Gastrocnemius medialis (tissue), 4 donors: ENCODE measurements at regions of chr12 and their contacts with region 1.

Region 1: GRCh38 chr12:40152783-40153383 is 47.0 kb upstream of the SLC2A13 start:
- DNase-seq: peak in 1 of 2 donors; percentile 21
- ATAC-seq: no peak
- H3K4me3 ChIP-seq: no peak overlapping the region
- H3K27ac ChIP-seq: no peak overlapping the region
- H3K4me1 ChIP-seq: no peaks in the 10 kb centered on the region
- H3K27me3 ChIP-seq: no peaks in the 10 kb centered on the region
- CTCF ChIP-seq: peak; percentile 37 to 81 (median 54)
- POLR2A ChIP-seq: no peak

Region 2: DNA sequence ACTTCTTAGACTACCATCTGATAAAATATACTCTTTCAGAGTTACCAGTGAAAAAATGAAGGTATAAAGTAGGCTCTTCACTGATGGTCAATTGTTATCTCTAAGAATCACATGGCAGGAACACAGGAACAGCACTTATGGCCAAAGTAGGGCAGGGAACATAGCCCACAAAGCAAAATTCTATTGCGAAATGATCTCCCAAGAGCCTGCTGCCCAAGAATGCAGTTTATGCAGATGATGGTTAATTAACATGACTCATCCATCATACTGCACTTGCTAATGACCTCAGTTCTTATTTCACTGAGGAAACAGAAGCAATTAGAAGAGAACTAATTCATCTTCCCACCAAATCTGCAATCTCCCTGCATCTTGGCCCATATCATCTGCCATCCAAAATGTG is 180.8 kb before region 1 on chr12:
- in situ Hi-C with region 1: no loop called
- intact Hi-C with region 1: no loop called
- DNase-seq: no peak
- ATAC-seq: no peak
- H3K4me3 ChIP-seq: no peak overlapping the region
- H3K27ac ChIP-seq: no peak overlapping the region
- H3K4me1 ChIP-seq: no peaks in the 10 kb centered on the region
- H3K27me3 ChIP-seq: no peaks in the 10 kb centered on the region
- CTCF ChIP-seq: no peak
- POLR2A ChIP-seq: no peak

Region 3: DNA sequence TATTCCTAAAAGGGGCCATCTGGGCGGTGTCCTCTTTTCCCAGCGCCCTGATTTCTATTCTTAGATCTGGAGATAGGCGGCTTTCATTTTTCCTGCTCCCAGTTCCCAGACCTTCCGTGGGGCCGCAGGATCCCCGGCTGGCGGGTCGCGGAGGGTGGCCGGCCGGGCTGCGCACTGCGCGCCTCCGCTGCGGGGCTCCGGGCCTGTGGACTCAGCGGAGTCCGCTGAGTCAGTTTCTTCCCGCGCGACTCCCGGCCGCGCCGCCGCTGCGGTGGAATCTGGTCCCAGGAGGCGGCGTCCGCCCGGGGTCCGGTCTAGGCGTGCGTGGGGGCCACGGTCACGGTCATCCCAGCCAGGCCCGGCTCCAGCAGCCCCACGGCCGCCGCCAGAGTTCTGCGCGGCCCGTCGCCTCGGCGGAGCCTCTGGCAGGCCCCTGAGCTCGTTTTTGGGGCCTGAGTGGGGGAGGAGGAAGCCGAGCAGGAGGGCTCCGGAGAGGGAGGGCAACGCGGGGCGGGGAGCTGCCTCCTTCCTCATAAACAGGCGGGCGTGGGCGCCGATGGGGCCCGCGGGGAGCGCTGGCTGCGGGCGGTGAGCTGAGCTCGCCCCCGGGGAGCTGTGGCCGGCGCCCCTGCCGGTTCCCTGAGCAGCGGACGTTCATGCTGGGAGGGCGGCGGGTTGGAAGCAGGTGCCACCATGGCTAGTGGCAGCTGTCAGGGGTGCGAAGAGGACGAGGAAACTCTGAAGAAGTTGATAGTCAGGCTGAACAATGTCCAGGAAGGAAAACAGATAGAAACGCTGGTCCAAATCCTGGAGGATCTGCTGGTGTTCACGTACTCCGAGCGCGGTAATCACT is 71.8 kb after region 1 on chr12 and contains the start of gene LRRK2:
- in situ Hi-C with region 1: loop called in 1 of 4 experiments (anchors 10 kb)
- intact Hi-C with region 1: loop called (anchors 2 kb)
- DNase-seq: peak; percentile 53 to 73
- ATAC-seq: peak; percentile 84 to 85
- H3K4me3 ChIP-seq: peak within 1 kb of the TSS; percentile 65 to 94 (median 80)
- H3K27ac ChIP-seq: peak within 1 kb of the TSS; percentile 74 to 99 (median 94)
- H3K4me1 ChIP-seq: peaks cover 11 to 23% of the 10 kb centered on the region in 2 donors
- H3K27me3 ChIP-seq: no peaks in the 10 kb centered on the region
- CTCF ChIP-seq: peak in 2 of 5 experiments; percentile 6 to 12
- POLR2A ChIP-seq: peak; percentile 39 to 55
- total RNA-seq, gene LRRK2: 4.5 to 10.7 (median 6.2) TPM

Region 4: GRCh38 chr12:40238256-40238902 is 85.5 kb after region 1 on chr12:
- in situ Hi-C with region 1: no loop called
- intact Hi-C with region 1: no loop called
- DNase-seq: no peak
- ATAC-seq: no peak
- H3K4me3 ChIP-seq: no peak overlapping the region
- H3K27ac ChIP-seq: no peak overlapping the region
- H3K4me1 ChIP-seq: no peaks in the 10 kb centered on the region
- H3K27me3 ChIP-seq: no peaks in the 10 kb centered on the region
- CTCF ChIP-seq: no peak
- POLR2A ChIP-seq: no peak

Region 5: DNA sequence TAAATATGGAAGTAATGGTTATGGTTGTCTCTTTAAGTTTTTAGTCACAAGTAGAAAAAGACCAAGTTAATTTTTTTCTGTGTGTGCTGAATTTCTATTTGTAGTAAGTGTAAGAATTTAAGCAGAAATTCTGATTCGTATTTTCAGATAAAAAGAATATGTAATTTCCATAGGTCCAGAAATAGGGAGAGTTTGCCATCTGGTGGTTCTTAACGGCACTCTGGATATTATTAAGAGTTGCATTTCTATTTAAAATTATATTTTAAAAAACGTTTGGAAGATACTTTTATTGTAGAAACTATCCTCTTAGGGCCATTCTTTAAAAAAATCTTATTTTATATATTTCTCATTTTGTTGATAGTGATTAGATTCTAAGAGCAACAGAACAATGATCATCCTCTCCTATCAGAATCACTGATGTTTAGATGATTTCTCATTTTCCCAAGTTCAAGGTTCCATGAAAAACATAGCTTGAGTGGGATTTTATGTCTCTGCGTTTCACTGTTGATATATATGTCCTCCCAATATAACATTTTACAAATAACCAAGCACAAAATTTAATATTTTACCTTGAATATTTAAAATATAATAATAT is 160.2 kb after region 1 on chr12:
- in situ Hi-C with region 1: loop called in 1 of 4 experiments (anchors 10 kb)
- intact Hi-C with region 1: no loop called
- DNase-seq: no peak
- ATAC-seq: no peak
- H3K4me3 ChIP-seq: no peak overlapping the region
- H3K27ac ChIP-seq: no peak overlapping the region
- H3K4me1 ChIP-seq: no peaks in the 10 kb centered on the region
- H3K27me3 ChIP-seq: no peaks in the 10 kb centered on the region
- CTCF ChIP-seq: no peak
- POLR2A ChIP-seq: no peak